Caco-2 (cell line): ENCODE measurements at regions of chr4 and their contacts with region 1.

Region 1: GRCh38 chr4:56387023-56388001 is at the start of gene AASDH:
- DNase-seq: peak; percentile 94 to 95
- H3K4me3 ChIP-seq: peak within 1 kb of the TSS; percentile 73
- H3K4me3 Mint-ChIP-seq: peak within 1 kb of the TSS; percentile 94
- H3K27ac Mint-ChIP-seq: peak within 1 kb of the TSS; percentile 99
- H3K4me1 ChIP-seq: no peaks in the 10 kb centered on the region; the same call in none of the 2 replicates
- H3K4me1 Mint-ChIP-seq: peaks cover 30% of the 10 kb centered on the region
- H3K27me3 ChIP-seq: no peaks in the 10 kb centered on the region
- H3K27me3 Mint-ChIP-seq: no peaks in the 10 kb centered on the region
- CTCF ChIP-seq: no peak
- total RNA-seq, gene AASDH: 12.8 and 13.7 TPM in 2 replicates

Region 2: DNA sequence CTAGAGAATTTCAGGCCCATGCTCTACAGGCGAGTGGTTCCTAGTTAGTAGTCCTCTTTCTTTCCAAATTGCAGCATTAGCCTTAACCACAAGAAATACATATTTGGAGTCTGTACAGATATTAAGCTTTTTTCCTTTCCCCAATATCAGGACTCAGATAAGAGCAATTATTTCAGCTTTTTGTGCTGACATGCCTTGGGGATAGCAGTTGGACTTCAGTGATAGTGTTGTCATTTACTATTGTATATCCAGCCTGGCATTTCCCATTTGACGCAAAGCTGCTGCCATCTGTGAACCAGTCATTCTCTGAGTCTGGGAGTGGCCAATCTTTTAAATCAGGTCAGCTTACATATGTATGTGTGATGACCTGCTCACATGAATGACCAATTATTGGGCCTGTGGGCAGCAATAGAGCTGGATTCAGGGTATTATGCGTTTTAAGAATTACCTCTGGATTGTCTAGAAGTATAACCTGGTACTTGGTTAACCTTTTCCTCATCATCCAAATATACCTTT is 445.4 kb before region 1 on chr4:
- CTCF ChIA-PET with region 1: no interaction called
- POLR2A ChIA-PET with region 1: interaction called, 10 read pairs
- intact Hi-C with region 1: no loop called
- DNase-seq: no peak
- H3K4me3 ChIP-seq: no peak overlapping the region
- H3K4me3 Mint-ChIP-seq: no peak overlapping the region
- H3K27ac Mint-ChIP-seq: no peak overlapping the region
- H3K4me1 ChIP-seq: peaks cover 14% of the 10 kb centered on the region
- H3K4me1 Mint-ChIP-seq: peaks cover 9% of the 10 kb centered on the region
- H3K27me3 ChIP-seq: no peaks in the 10 kb centered on the region
- H3K27me3 Mint-ChIP-seq: no peaks in the 10 kb centered on the region
- CTCF ChIP-seq: no peak

Region 3: GRCh38 chr4:55948726-55949474 is 438.4 kb before region 1 on chr4 and contains the start of gene CEP135:
- CTCF ChIA-PET with region 1: interaction called, 3 read pairs
- POLR2A ChIA-PET with region 1: interaction called, 9 read pairs
- intact Hi-C with region 1: loop called (anchors 2 kb)
- DNase-seq: peak; percentile 92 to 95
- H3K4me3 ChIP-seq: peak within 1 kb of the TSS; percentile 85
- H3K4me3 Mint-ChIP-seq: peak within 1 kb of the TSS; percentile 90
- H3K27ac Mint-ChIP-seq: peak within 1 kb of the TSS; percentile 93
- H3K4me1 ChIP-seq: 0 out of 2 replicates have a peak, but pooled peaks cover 10% of the 10 kb centered on the region
- H3K4me1 Mint-ChIP-seq: peaks cover 16% of the 10 kb centered on the region
- H3K27me3 ChIP-seq: no peaks in the 10 kb centered on the region
- H3K27me3 Mint-ChIP-seq: no peaks in the 10 kb centered on the region
- CTCF ChIP-seq: peak; percentile 80 to 90
- total RNA-seq, gene CEP135: 10.5 and 11.3 TPM in 2 replicates

Region 4: GRCh38 chr4:56410235-56411062 is 23.1 kb after region 1 on chr4:
- CTCF ChIA-PET with region 1: interaction called, 3 read pairs
- POLR2A ChIA-PET with region 1: interaction called, 10 read pairs
- intact Hi-C with region 1: no loop called
- DNase-seq: peak; percentile 52 to 77
- H3K4me3 ChIP-seq: no peak overlapping the region; the same call in 1 of the 2 replicates
- H3K4me3 Mint-ChIP-seq: peak overlapping the region; percentile 38
- H3K27ac Mint-ChIP-seq: peak overlapping the region; percentile 95
- H3K4me1 ChIP-seq: peaks cover 20% of the 10 kb centered on the region
- H3K4me1 Mint-ChIP-seq: peaks cover 6% of the 10 kb centered on the region
- H3K27me3 ChIP-seq: no peaks in the 10 kb centered on the region
- H3K27me3 Mint-ChIP-seq: no peaks in the 10 kb centered on the region
- CTCF ChIP-seq: no peak

Region 5: GRCh38 chr4:56879811-56880395 is 492.6 kb after region 1 on chr4:
- CTCF ChIA-PET with region 1: no interaction called
- POLR2A ChIA-PET with region 1: interaction called, 25 read pairs
- intact Hi-C with region 1: no loop called
- DNase-seq: peak in 1 of 2 experiments; percentile 8
- H3K4me3 ChIP-seq: no peak overlapping the region
- H3K4me3 Mint-ChIP-seq: no peak overlapping the region
- H3K27ac Mint-ChIP-seq: no peak overlapping the region
- H3K4me1 ChIP-seq: peaks cover 11% of the 10 kb centered on the region; the same call in 1 of the 2 replicates
- H3K4me1 Mint-ChIP-seq: peaks cover 6% of the 10 kb centered on the region
- H3K27me3 ChIP-seq: no peaks in the 10 kb centered on the region
- H3K27me3 Mint-ChIP-seq: no peaks in the 10 kb centered on the region
- CTCF ChIP-seq: no peak